ENCODE measurements at regions of chr9 and their contacts with region 1.

Region 1: GRCh38 chr9:78121488-78121887 is 89.9 kb upstream of the GNAQ start:
- DNase-seq: no peak
- H3K4me3 ChIP-seq: no peak overlapping the region
- H3K27ac ChIP-seq: no peak overlapping the region
- H3K4me1 ChIP-seq: peaks cover 20% of the 10 kb centered on the region
- H3K27me3 ChIP-seq: no peaks in the 10 kb centered on the region
- CTCF ChIP-seq: peak; percentile 58 to 68 (median 62)

Region 2: GRCh38 chr9:78074385-78075291 is 46.9 kb before region 1 on chr9:
- dilution Hi-C with region 1: loop called (anchors 5 kb)
- DNase-seq: no peak
- H3K4me3 ChIP-seq: no peak overlapping the region
- H3K27ac ChIP-seq: no peak overlapping the region
- H3K4me1 ChIP-seq: no peaks in the 10 kb centered on the region
- H3K27me3 ChIP-seq: no peaks in the 10 kb centered on the region
- CTCF ChIP-seq: no peak

Measured in keratinocyte (primary cell).